H1 (cell line): ENCODE measurements at regions of chr12 and their contacts with region 1.

Region 1: GRCh38 chr12:101830367-101831325 is at the start of gene GNPTAB:
- DNase-seq: peak; percentile 76 to 95
- H3K4me3 ChIP-seq: peak within 1 kb of the TSS; percentile 83 to 96 (median 90)
- H3K27ac ChIP-seq: no peak within 1 kb of the TSS; the same call in 1 of the 2 replicates
- H3K4me1 ChIP-seq: peaks cover 0 to 17% (median 5%) of the 10 kb centered on the region in 4 experiments; a peak in 3 of 7 replicates
- H3K27me3 ChIP-seq: no peaks in the 10 kb centered on the region
- CTCF ChIP-seq: peak; percentile 72 to 76 (median 74)
- EP300 ChIP-seq: 0 out of 3 replicates have a peak, but pooled peaks of 1 of the 2 experiments have one; percentile 47
- POLR2A ChIP-seq: no peak; a peak in 1 of 3 replicates
- RAD21 ChIP-seq: peak; percentile 59 to 63
- total RNA-seq, gene GNPTAB: 51.3 and 54.6 TPM in 2 replicates

Region 2: DNA sequence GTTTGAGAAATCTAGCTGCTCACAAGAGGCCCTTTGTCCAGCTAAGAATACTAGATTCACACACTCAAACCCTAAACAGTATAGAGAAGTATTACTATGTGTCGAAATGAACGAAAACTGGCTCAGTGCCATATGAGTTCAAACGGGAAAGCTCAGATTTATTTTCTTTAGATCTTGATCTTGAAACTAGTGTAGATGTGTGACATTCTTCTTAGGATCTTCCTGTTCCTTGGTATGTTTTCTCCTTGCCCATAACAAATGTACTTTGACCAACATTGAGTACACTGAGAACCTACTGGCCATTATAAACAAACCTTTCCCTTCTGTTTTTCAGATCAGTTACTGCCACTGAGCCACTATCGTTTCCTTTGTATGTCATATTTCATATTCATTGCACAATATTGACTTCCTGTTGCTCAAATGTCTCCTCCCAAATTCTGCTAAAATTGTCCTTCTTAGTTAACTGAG is 214.6 kb before region 1 on chr12:
- CTCF ChIA-PET with region 1: no interaction called
- POLR2A ChIA-PET with region 1: no interaction called
- DNase-seq: no peak
- H3K4me3 ChIP-seq: no peak overlapping the region
- H3K27ac ChIP-seq: no peak overlapping the region
- H3K4me1 ChIP-seq: no peaks in the 10 kb centered on the region
- H3K27me3 ChIP-seq: no peaks in the 10 kb centered on the region
- CTCF ChIP-seq: no peak
- EP300 ChIP-seq: no peak
- POLR2A ChIP-seq: no peak
- RAD21 ChIP-seq: no peak

Region 3: GRCh38 chr12:101773650-101774162 is 56.9 kb before region 1 on chr12:
- CTCF ChIA-PET with region 1: interaction called, 114 read pairs
- POLR2A ChIA-PET with region 1: no interaction called
- DNase-seq: peak; percentile 5 to 64
- H3K4me3 ChIP-seq: no peak overlapping the region
- H3K27ac ChIP-seq: no peak overlapping the region
- H3K4me1 ChIP-seq: no peaks in the 10 kb centered on the region
- H3K27me3 ChIP-seq: no peaks in the 10 kb centered on the region
- CTCF ChIP-seq: peak; percentile 34 to 80 (median 79)
- EP300 ChIP-seq: no peak
- POLR2A ChIP-seq: no peak
- RAD21 ChIP-seq: peak; percentile 94 to 95

Region 4: GRCh38 chr12:101782273-101782731 is 48.3 kb before region 1 on chr12:
- CTCF ChIA-PET with region 1: interaction called, 23 read pairs
- POLR2A ChIA-PET with region 1: no interaction called
- DNase-seq: no peak
- H3K4me3 ChIP-seq: no peak overlapping the region
- H3K27ac ChIP-seq: no peak overlapping the region
- H3K4me1 ChIP-seq: no peaks in the 10 kb centered on the region
- H3K27me3 ChIP-seq: no peaks in the 10 kb centered on the region
- CTCF ChIP-seq: no peak
- EP300 ChIP-seq: no peak
- POLR2A ChIP-seq: no peak
- RAD21 ChIP-seq: no peak

Region 5: GRCh38 chr12:101792051-101792931 is 38.4 kb before region 1 on chr12:
- CTCF ChIA-PET with region 1: interaction called, 22 read pairs
- POLR2A ChIA-PET with region 1: interaction called, 3 read pairs
- DNase-seq: no peak
- H3K4me3 ChIP-seq: no peak overlapping the region
- H3K27ac ChIP-seq: no peak overlapping the region
- H3K4me1 ChIP-seq: no peaks in the 10 kb centered on the region
- H3K27me3 ChIP-seq: no peaks in the 10 kb centered on the region
- CTCF ChIP-seq: peak in 1 of 3 experiments; percentile 31; a peak in 1 of 4 replicates
- EP300 ChIP-seq: no peak
- POLR2A ChIP-seq: no peak
- RAD21 ChIP-seq: no peak

Region 6: GRCh38 chr12:101968770-101969169 is 138.1 kb after region 1 on chr12:
- CTCF ChIA-PET with region 1: no interaction called
- POLR2A ChIA-PET with region 1: no interaction called
- DNase-seq: no peak
- H3K4me3 ChIP-seq: no peak overlapping the region
- H3K27ac ChIP-seq: no peak overlapping the region
- H3K4me1 ChIP-seq: no peaks in the 10 kb centered on the region
- H3K27me3 ChIP-seq: no peaks in the 10 kb centered on the region
- CTCF ChIP-seq: no peak
- EP300 ChIP-seq: no peak
- POLR2A ChIP-seq: no peak
- RAD21 ChIP-seq: no peak